ENCODE measurements at regions of chr1 and their contacts with region 1.

Region 1: DNA sequence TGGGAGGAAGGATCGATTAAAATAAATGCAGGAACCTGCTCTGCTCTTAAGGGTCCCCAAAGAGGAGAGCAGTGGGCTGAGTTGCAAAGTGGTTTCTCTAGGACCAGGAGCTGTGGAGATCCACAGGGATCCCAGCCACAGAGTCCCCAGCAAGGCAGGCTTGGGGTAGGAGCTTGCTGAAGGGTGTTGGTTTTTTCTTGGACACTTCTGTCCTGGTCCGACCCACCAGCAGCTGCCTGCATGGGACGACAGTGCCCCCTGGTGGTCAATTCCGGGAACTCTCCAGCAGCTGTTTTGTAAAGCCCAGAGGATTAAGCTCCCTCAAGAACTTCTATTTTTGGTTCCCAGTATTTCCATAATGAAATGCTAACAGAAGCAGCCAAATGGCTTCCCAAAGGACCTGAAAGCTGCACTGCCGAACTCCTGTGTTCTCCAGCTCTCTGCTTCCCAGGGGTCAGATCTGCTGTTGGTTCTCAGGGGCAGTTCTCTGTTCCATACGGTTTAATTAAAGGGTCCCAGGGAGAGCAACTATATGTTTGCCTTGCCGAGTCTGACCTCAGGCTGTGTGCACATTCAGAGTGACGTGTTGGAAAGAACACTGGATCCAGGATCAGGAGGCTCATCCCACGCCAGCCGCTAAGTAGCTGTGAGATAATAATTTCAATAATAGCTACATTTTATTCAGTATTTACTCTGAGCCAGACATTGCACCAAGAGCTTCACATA is 23.2 kb downstream of the NENF start:
- DNase-seq: peak; percentile 62 to 85 (median 77)
- H3K4me3 ChIP-seq: no peak overlapping the region
- H3K4me3 Mint-ChIP-seq: no peak overlapping the region
- H3K27ac ChIP-seq: no peak overlapping the region
- H3K27ac Mint-ChIP-seq: peak overlapping the region in 1 of 8 donors; percentile 66
- H3K4me1 ChIP-seq: no peaks in the 10 kb centered on the region
- H3K4me1 Mint-ChIP-seq: no peaks in the 10 kb centered on the region
- H3K27me3 ChIP-seq: no peaks in the 10 kb centered on the region
- H3K27me3 Mint-ChIP-seq: no peaks in the 10 kb centered on the region

Region 2: DNA sequence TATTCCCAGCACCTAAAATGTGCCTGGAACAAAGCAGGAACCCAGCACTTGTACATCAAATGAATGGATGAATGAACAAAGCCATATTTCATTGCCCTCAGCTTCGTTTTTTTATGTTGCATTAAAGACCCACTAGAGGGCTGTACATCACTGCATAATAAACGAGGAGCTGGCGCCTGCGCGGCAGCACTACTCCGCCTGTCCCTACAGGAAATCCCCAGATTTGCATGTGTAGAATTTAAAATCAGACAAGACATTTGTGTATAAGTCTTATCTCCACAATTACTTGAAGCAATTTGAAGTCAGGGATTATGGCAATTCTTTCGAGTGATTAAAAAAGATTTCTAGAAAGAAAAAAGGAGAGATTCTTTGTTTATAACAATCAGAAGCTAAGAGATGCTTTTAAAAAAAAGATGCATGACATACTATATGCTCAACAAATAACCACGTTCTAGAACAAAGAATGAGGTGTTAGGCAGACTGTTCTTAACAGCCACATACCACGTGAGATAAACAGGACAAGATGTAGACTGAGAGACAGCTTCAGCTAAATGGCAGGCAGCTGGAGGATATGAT is 775.1 kb before region 1 on chr1:
- CTCF ChIA-PET with region 1: interaction called, 28 read pairs
- POLR2A ChIA-PET with region 1: no interaction called
- DNase-seq: peak; percentile 64 to 86 (median 77)
- H3K4me3 ChIP-seq: no peak overlapping the region
- H3K4me3 Mint-ChIP-seq: peak overlapping the region in 6 of 7 donors; percentile 15 to 50 (median 37)
- H3K27ac ChIP-seq: no peak overlapping the region
- H3K27ac Mint-ChIP-seq: peak overlapping the region; percentile 90 to 98 (median 94)
- H3K4me1 ChIP-seq: peaks cover 14% of the 10 kb centered on the region
- H3K4me1 Mint-ChIP-seq: peaks cover 24 to 30% (median 25%) of the 10 kb centered on the region in 3 donors
- H3K27me3 ChIP-seq: no peaks in the 10 kb centered on the region
- H3K27me3 Mint-ChIP-seq: no peaks in the 10 kb centered on the region

Region 3: DNA sequence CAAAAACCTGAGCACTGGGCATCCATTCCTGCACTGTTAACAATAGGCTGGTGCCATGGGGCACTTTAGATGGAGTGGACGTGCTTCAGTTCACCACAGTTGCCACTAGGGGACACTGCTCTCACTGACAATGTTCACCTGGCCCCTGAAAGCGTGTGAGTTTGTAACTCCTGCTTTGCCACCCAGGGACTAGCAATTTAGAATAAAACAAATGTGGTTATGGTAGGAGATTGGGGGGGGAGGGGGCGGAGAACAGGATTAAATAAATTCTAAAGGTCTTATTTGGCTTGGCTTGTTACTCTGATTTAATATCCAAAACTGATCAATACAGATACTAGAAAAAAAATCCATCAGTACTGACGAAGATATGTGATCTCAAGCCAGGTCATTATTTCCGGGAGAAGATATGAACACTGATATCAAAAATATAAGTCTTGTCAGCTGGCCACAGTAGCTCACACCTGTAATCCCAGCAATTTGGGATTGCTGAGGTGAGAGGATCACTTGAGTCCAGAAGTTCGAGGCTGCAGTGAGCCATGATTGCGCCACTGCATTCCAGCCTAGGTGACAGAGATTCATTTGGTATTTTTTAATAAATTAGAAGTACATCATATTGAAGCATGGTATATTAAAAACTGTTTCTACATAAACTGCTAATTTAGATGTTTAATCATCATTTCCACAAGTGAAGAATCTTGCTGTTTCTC is 443.8 kb before region 1 on chr1:
- CTCF ChIA-PET with region 1: interaction called, 11 read pairs
- POLR2A ChIA-PET with region 1: no interaction called
- DNase-seq: peak; percentile 32 to 72 (median 43)
- H3K4me3 ChIP-seq: no peak overlapping the region
- H3K4me3 Mint-ChIP-seq: no peak overlapping the region
- H3K27ac ChIP-seq: no peak overlapping the region
- H3K27ac Mint-ChIP-seq: peak overlapping the region in 1 of 8 donors; percentile 1
- H3K4me1 ChIP-seq: no peaks in the 10 kb centered on the region
- H3K4me1 Mint-ChIP-seq: peaks cover 0 to 3% (median 3%) of the 10 kb centered on the region in 3 donors
- H3K27me3 ChIP-seq: no peaks in the 10 kb centered on the region
- H3K27me3 Mint-ChIP-seq: no peaks in the 10 kb centered on the region

Region 4: GRCh38 chr1:212062832-212063438 is 393.0 kb before region 1 on chr1:
- CTCF ChIA-PET with region 1: interaction called, 73 read pairs
- POLR2A ChIA-PET with region 1: no interaction called
- DNase-seq: peak in 2 of 5 donors; percentile 24
- H3K4me3 ChIP-seq: no peak overlapping the region
- H3K4me3 Mint-ChIP-seq: no peak overlapping the region
- H3K27ac ChIP-seq: no peak overlapping the region
- H3K27ac Mint-ChIP-seq: no peak overlapping the region
- H3K4me1 ChIP-seq: no peaks in the 10 kb centered on the region
- H3K4me1 Mint-ChIP-seq: no peaks in the 10 kb centered on the region
- H3K27me3 ChIP-seq: no peaks in the 10 kb centered on the region
- H3K27me3 Mint-ChIP-seq: no peaks in the 10 kb centered on the region

Region 5: GRCh38 chr1:212284744-212285684 is 171.0 kb before region 1 on chr1 and contains the start of gene PPP2R5A:
- CTCF ChIA-PET with region 1: interaction called, 10 read pairs
- POLR2A ChIA-PET with region 1: no interaction called
- DNase-seq: peak; percentile 97 to 99 (median 99)
- H3K4me3 ChIP-seq: peak within 1 kb of the TSS; percentile 98
- H3K4me3 Mint-ChIP-seq: peak within 1 kb of the TSS; percentile 96 to 100 (median 99)
- H3K27ac ChIP-seq: peak within 1 kb of the TSS; percentile 97
- H3K27ac Mint-ChIP-seq: peak within 1 kb of the TSS; percentile 91 to 100 (median 98)
- H3K4me1 ChIP-seq: peaks cover 33% of the 10 kb centered on the region
- H3K4me1 Mint-ChIP-seq: peaks cover 34 to 53% (median 45%) of the 10 kb centered on the region in 3 donors
- H3K27me3 ChIP-seq: no peaks in the 10 kb centered on the region
- H3K27me3 Mint-ChIP-seq: no peaks in the 10 kb centered on the region
- total RNA-seq, gene PPP2R5A: 46.1 to 46.9 TPM

Region 6: DNA sequence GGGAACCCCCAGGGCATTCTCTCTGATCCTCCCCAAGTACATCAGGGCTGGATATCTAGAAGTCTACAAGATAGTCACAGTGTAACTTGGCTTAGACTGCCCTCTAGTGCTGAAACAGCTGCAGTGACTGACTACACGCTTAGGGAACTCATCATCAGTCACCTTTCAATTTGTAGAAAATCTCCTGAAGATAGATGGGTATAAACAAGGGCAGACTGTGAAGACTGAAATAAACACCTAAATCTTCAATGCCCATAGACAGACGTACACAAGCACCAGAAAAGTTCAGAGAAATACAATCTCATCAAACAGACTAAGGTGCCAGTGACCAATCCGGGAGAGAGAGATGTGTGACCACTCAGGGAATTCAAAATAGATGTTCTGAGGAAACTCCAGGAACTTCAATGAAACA is 87.9 kb before region 1 on chr1:
- CTCF ChIA-PET with region 1: interaction called, 10 read pairs
- POLR2A ChIA-PET with region 1: no interaction called
- DNase-seq: peak; percentile 13 to 64 (median 40)
- H3K4me3 ChIP-seq: no peak overlapping the region
- H3K4me3 Mint-ChIP-seq: no peak overlapping the region
- H3K27ac ChIP-seq: no peak overlapping the region
- H3K27ac Mint-ChIP-seq: peak overlapping the region in 2 of 8 donors; percentile 6 to 25
- H3K4me1 ChIP-seq: no peaks in the 10 kb centered on the region
- H3K4me1 Mint-ChIP-seq: peaks cover 0 to 11% (median 0%) of the 10 kb centered on the region in 3 donors
- H3K27me3 ChIP-seq: no peaks in the 10 kb centered on the region
- H3K27me3 Mint-ChIP-seq: no peaks in the 10 kb centered on the region

Region 7: GRCh38 chr1:212401838-212402582 is 54.0 kb before region 1 on chr1:
- CTCF ChIA-PET with region 1: no interaction called
- POLR2A ChIA-PET with region 1: no interaction called
- DNase-seq: no peak
- H3K4me3 ChIP-seq: no peak overlapping the region
- H3K4me3 Mint-ChIP-seq: no peak overlapping the region
- H3K27ac ChIP-seq: no peak overlapping the region
- H3K27ac Mint-ChIP-seq: peak overlapping the region in 2 of 8 donors; percentile 35 to 89
- H3K4me1 ChIP-seq: no peaks in the 10 kb centered on the region
- H3K4me1 Mint-ChIP-seq: peaks cover 14 to 20% (median 18%) of the 10 kb centered on the region in 3 donors
- H3K27me3 ChIP-seq: no peaks in the 10 kb centered on the region
- H3K27me3 Mint-ChIP-seq: peaks cover 0 to 3% of the 10 kb centered on the region in 2 donors

Region 8: DNA sequence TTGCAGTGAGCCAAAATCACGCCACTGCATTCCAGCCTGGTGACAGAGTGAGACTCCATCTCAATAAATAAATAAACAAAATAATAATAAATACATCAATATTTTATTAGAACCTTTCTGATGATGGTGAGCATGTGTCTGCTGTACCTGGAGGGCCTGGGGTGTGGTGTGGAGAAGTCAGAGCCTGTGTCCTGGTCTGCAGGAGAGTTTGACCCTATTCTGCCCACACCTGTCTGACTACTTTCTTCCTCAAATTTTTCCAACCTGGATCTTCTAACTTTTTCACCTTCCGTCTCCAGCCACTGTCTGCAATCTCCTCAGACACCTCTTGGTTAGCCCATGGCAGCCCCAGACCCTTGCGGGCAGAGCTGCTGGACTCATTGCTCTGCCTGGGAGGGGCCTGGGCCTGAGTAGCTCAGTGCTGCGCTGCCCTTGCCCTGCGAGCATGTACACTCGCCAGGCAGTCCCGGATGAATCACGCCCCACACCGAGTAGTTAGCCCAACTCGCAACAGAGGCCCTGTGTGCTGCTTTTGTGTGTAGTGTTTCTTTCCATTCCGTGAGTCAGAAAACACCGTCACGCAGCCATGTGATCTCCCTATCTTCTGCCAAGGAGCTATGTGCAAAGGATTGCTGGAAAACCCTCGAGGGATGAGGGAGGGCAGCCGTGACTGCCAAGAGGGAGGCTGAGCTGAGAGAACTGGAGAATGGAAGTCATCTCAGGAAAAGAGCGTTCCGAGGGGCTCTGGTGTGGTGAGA is 13.9 kb after region 1 on chr1:
- CTCF ChIA-PET with region 1: interaction called, 25 read pairs
- POLR2A ChIA-PET with region 1: no interaction called
- DNase-seq: no peak
- H3K4me3 ChIP-seq: no peak overlapping the region
- H3K4me3 Mint-ChIP-seq: no peak overlapping the region
- H3K27ac ChIP-seq: no peak overlapping the region
- H3K27ac Mint-ChIP-seq: peak overlapping the region in 1 of 8 donors; percentile 6
- H3K4me1 ChIP-seq: no peaks in the 10 kb centered on the region
- H3K4me1 Mint-ChIP-seq: no peaks in the 10 kb centered on the region
- H3K27me3 ChIP-seq: no peaks in the 10 kb centered on the region
- H3K27me3 Mint-ChIP-seq: peaks cover 6 to 11% of the 10 kb centered on the region in 2 donors

Region 9: GRCh38 chr1:212525479-212526110 is 69.6 kb after region 1 on chr1:
- CTCF ChIA-PET with region 1: no interaction called
- POLR2A ChIA-PET with region 1: no interaction called
- DNase-seq: no peak
- H3K4me3 ChIP-seq: no peak overlapping the region
- H3K4me3 Mint-ChIP-seq: no peak overlapping the region
- H3K27ac ChIP-seq: no peak overlapping the region
- H3K27ac Mint-ChIP-seq: peak overlapping the region in 1 of 8 donors; percentile 17
- H3K4me1 ChIP-seq: no peaks in the 10 kb centered on the region
- H3K4me1 Mint-ChIP-seq: no peaks in the 10 kb centered on the region
- H3K27me3 ChIP-seq: no peaks in the 10 kb centered on the region
- H3K27me3 Mint-ChIP-seq: peaks cover 6 to 14% of the 10 kb centered on the region in 2 donors